Mucosa of descending colon (tissue), 3 donors: ENCODE measurements at regions of chr10 and their contacts with region 1.

Region 1: GRCh38 chr10:29446327-29446726 is 157.5 kb downstream of the LYZL1 start:
- DNase-seq: no peak
- ATAC-seq: no peak
- H3K4me3 ChIP-seq: no peak overlapping the region
- H3K4me1 ChIP-seq: no peaks in the 10 kb centered on the region
- CTCF ChIP-seq: no peak

Region 2: GRCh38 chr10:28991326-28992270 is 454.7 kb before region 1 on chr10:
- intact Hi-C with region 1: no loop called
- DNase-seq: peak in 2 of 3 donors; percentile 47 to 62
- ATAC-seq: peak; percentile 79
- H3K4me3 ChIP-seq: no peak overlapping the region
- H3K4me1 ChIP-seq: no peaks in the 10 kb centered on the region
- CTCF ChIP-seq: peak; percentile 45

Region 3: DNA sequence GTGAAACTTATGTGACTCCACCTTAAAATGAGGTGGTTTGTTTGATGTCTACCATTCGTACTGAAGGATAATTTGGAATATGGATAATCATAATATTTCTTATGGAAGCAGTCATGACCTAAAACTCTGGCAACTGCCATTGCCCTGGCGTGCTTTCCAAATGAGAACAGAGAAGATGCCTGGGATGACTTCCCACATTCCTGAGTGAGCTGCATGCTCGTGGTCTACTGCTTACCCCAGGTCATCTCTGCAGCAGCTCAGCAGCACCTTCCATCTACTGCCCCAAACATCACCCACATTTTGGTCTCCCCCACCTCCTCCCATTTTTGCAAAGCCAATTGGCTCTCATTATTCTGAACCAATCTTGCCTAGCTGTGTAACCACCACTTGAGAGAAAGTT is 117.3 kb before region 1 on chr10:
- intact Hi-C with region 1: no loop called
- DNase-seq: peak in 1 of 3 donors; percentile 10
- ATAC-seq: no peak
- H3K4me3 ChIP-seq: no peak overlapping the region
- H3K4me1 ChIP-seq: no peaks in the 10 kb centered on the region
- CTCF ChIP-seq: no peak

Region 4: GRCh38 chr10:29386342-29386999 is 59.9 kb before region 1 on chr10:
- intact Hi-C with region 1: loop called in 1 of 2 experiments (anchors 5 kb)
- DNase-seq: no peak
- ATAC-seq: peak; percentile 57
- H3K4me3 ChIP-seq: no peak overlapping the region
- H3K4me1 ChIP-seq: no peaks in the 10 kb centered on the region
- CTCF ChIP-seq: peak; percentile 52